ENCODE measurements at regions of chr2 and their contacts with region 1.

Region 1: DNA sequence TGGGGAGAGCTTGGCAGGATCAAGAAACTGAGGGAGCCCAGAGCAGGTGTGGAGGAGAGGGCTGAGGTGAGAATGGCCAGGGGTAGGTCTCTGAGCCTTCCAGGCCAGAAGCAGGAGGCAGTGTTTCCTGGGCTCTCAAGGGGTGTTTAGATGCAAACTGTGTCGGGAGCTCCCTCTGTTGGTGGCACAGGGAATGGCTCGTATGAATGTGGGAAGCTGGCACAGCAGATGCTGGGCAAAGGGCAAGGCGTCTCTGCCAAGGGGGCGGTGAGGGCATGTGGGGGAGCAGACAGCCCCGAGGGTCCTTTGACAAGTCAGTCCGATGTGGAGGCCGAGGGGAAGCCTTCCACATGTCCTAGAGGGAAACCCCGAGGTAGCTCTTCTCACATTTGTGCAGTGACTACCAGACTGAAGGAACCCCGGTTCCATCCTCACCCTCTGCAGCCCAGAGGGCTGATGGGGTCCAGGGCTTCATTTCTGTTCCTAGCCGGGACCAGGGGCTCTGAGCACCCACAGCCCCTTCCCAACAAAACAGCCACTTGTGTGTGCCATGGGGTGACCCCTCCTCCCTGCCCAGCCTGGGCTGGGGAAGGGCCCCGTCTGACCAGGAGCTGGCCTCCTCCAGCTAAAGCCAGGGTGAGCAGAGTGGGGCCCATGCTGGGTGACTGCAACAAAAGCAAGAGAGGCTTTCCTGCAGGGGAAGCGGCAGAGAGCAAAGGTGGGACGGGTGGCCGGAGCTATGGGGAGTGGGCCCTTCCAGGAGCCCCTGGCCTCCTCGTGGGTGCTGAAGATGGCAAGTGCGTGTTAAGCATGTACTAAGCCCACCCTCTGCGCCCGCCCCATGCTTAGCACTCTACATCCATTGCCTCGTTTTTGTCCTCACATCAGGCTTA is 103.4 kb downstream of the SEPTIN10 start:
- DNase-seq: peak; percentile 61
- H3K4me3 Mint-ChIP-seq: no peak overlapping the region
- H3K27ac Mint-ChIP-seq: no peak overlapping the region
- H3K4me1 Mint-ChIP-seq: no peaks in the 10 kb centered on the region
- H3K27me3 Mint-ChIP-seq: peaks cover 4% of the 10 kb centered on the region

Region 2: DNA sequence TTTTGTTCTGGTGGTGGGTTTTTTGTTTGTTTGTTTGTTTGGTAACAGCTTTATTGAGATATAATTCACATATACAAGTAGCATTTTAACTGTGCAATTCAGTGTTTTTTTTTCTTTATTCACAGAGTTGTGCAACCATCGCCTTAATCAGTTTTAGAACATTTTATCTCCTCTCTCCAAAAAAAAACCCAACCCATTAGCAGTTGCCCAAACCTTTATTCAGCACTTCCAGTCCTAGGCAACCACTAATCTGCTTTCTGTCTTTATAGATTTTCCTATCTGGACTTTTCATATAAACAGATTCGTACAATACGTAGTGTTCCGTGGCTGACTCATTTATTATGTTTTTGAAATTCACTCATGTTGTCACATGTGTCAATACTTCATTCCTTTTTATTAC is 685.1 kb before region 1 on chr2:
- intact Hi-C with region 1: no loop called
- DNase-seq: no peak
- H3K4me3 Mint-ChIP-seq: no peak overlapping the region
- H3K27ac Mint-ChIP-seq: no peak overlapping the region
- H3K4me1 Mint-ChIP-seq: no peaks in the 10 kb centered on the region
- H3K27me3 Mint-ChIP-seq: no peaks in the 10 kb centered on the region

Region 3: GRCh38 chr2:109128048-109128465 is 382.3 kb before region 1 on chr2:
- intact Hi-C with region 1: loop called (anchors 1 kb)
- DNase-seq: peak; percentile 40
- H3K4me3 Mint-ChIP-seq: peak overlapping the region; percentile 68
- H3K27ac Mint-ChIP-seq: no peak overlapping the region
- H3K4me1 Mint-ChIP-seq: peaks cover 19% of the 10 kb centered on the region
- H3K27me3 Mint-ChIP-seq: peaks cover 62% of the 10 kb centered on the region

Region 4: GRCh38 chr2:109348671-109349550 is 161.5 kb before region 1 on chr2:
- intact Hi-C with region 1: loop called (anchors 10 kb)
- DNase-seq: no peak
- H3K4me3 Mint-ChIP-seq: peak overlapping the region; percentile 1
- H3K27ac Mint-ChIP-seq: peak overlapping the region; percentile 51
- H3K4me1 Mint-ChIP-seq: peaks cover 19% of the 10 kb centered on the region
- H3K27me3 Mint-ChIP-seq: peaks cover 22% of the 10 kb centered on the region

Region 5: GRCh38 chr2:109410039-109410815 is 100.2 kb before region 1 on chr2:
- intact Hi-C with region 1: no loop called
- DNase-seq: no peak
- H3K4me3 Mint-ChIP-seq: no peak overlapping the region
- H3K27ac Mint-ChIP-seq: no peak overlapping the region
- H3K4me1 Mint-ChIP-seq: no peaks in the 10 kb centered on the region
- H3K27me3 Mint-ChIP-seq: no peaks in the 10 kb centered on the region